OCI-LY7 (cell line): ENCODE measurements at regions of chr21 and their contacts with region 1.

Region 1: GRCh38 chr21:25734904-25735645 is at the starts of genes ATP5PF and GABPA:
- DNase-seq: peak; percentile 98
- H3K4me3 ChIP-seq: peak within 1 kb of the TSS; percentile 85
- H3K27ac ChIP-seq: peak within 1 kb of the TSS; percentile 92
- H3K4me1 ChIP-seq: peaks cover 51% of the 10 kb centered on the region
- CTCF ChIP-seq: no peak
- total RNA-seq, gene ATP5PF: 70.6 and 83.8 TPM in 2 replicates
- total RNA-seq, gene GABPA: 21.9 and 22.2 TPM in 2 replicates

Region 2: DNA sequence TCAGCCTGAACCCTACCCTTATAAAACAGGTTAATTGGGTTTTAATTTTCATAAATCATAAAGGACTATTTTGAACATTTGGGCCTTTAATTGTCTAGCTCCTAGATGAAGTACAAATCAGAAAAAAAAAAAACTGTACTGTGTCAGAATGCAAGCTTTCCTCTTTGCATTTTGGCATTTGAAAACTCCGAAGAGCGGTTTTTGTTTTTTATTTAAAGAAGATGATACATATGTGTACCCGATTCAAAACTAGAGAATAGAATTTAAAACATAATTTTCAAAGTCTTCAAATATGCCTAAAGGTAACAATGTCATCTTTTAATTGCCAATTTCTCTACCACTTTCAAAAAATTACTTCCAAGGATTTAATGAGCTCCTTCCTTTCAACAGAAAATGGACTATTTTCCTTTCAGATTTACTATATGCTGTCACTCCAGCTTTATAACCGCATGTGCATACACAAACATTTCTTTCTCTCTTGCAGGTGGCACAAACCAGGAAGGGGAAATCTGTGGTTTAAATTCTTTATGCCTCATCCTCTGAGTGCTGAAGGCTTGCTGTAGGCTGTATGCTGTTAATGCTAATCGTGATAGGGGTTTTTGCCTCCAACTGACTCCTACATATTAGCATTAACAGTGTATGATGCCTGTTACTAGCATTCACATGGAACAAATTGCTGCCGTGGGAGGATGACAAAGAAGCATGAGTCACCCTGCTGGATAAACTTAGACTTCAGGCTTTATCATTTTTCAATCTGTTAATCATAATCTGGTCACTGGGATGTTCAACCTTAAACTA is 161.5 kb before region 1 on chr21:
- CTCF ChIA-PET with region 1: no interaction called
- POLR2A ChIA-PET with region 1: interaction called, 5 read pairs
- intact Hi-C with region 1: loop called (anchors 10 kb)
- DNase-seq: peak; percentile 80
- H3K4me3 ChIP-seq: peak overlapping the region; percentile 45
- H3K27ac ChIP-seq: peak overlapping the region; percentile 85
- H3K4me1 ChIP-seq: peaks cover 38% of the 10 kb centered on the region
- CTCF ChIP-seq: no peak

Region 3: DNA sequence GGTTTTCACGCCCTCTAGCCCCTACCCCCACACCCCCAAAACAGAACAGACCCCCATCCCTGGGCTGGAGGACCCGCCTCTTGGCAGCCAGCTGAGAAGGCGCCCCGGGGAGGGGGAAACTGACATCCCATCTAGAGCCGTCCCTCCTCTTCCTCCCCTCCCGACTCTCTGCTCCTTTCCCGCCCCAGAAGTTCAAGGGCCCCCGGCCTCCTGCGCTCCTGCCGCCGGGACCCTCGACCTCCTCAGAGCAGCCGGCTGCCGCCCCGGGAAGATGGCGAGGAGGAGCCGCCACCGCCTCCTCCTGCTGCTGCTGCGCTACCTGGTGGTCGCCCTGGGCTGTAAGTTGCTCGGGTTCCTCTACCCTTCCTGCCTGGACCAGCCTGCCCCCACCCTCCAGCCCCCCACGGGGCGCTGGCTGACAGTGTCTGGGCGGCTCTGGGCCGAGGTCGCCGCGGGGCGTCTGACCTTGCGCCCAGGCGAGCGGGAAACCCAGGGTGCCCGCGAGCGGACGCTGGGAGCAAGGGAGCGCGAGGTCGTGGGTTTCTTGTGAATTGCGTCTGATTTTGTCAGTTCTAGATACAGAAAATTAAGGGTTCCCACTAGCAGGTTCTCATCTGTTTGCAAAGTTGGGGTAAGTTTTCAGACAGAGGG is 95.4 kb before region 1 on chr21:
- CTCF ChIA-PET with region 1: no interaction called
- POLR2A ChIA-PET with region 1: interaction called, 4 read pairs
- intact Hi-C with region 1: loop called (anchors 2 kb)
- DNase-seq: peak; percentile 56
- H3K4me3 ChIP-seq: peak overlapping the region; percentile 70
- H3K27ac ChIP-seq: no peak overlapping the region
- H3K4me1 ChIP-seq: peaks cover 19% of the 10 kb centered on the region
- CTCF ChIP-seq: peak; percentile 46; the same call in 1 of the 2 replicates

Region 4: DNA sequence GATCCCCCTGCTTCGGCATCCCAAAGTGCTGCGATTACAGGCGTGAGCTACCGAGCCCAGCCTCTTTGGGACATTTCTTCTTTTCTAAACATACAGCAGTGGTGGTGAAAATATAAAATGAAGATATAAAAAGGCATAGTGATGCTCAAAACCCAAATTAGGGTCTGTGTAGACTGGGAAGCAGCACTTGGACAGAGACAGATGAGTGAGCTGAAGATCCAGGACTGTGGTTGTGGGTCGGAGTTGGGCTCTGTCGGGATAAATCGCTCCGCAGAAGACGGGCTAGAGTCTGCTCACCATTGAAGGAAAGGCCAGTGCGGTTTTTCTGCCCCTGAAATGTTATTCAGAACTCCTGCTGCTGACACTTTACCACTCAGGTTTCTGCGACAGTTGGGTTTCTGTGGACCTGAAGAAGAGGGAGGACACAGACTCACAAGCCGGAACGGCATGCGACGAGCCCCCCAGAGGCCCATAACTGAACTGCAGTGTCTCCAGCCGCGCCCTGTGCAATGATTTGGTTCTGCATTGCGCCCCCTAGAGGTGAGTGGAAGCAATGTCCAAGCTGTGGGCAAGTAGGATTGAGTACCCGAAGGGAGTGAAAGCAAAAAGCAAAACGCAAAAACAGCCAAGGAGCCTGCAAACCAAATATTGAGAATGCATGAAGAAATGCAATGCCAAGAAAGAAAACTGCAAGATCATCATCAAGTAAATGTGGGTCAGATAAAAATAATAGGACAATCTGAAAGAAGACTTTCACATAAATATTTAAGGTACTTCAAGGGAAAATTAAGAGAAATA is 66.3 kb after region 1 on chr21:
- CTCF ChIA-PET with region 1: no interaction called
- POLR2A ChIA-PET with region 1: no interaction called
- intact Hi-C with region 1: no loop called
- DNase-seq: peak; percentile 86
- H3K4me3 ChIP-seq: no peak overlapping the region
- H3K27ac ChIP-seq: no peak overlapping the region
- H3K4me1 ChIP-seq: no peaks in the 10 kb centered on the region
- CTCF ChIP-seq: peak; percentile 99

Region 5: GRCh38 chr21:25813917-25814316 is 78.8 kb after region 1 on chr21:
- CTCF ChIA-PET with region 1: no interaction called
- POLR2A ChIA-PET with region 1: no interaction called
- intact Hi-C with region 1: no loop called
- DNase-seq: no peak
- H3K4me3 ChIP-seq: no peak overlapping the region
- H3K27ac ChIP-seq: no peak overlapping the region
- H3K4me1 ChIP-seq: no peaks in the 10 kb centered on the region
- CTCF ChIP-seq: no peak

Region 6: GRCh38 chr21:25967573-25968438 is 232.7 kb after region 1 on chr21:
- CTCF ChIA-PET with region 1: interaction called, 3 read pairs
- POLR2A ChIA-PET with region 1: interaction called, 5 read pairs
- intact Hi-C with region 1: loop called (anchors 2 kb)
- DNase-seq: peak; percentile 87
- H3K4me3 ChIP-seq: peak overlapping the region; percentile 37
- H3K27ac ChIP-seq: peak overlapping the region; percentile 74
- H3K4me1 ChIP-seq: peaks cover 20% of the 10 kb centered on the region
- CTCF ChIP-seq: no peak